Right ventricle myocardium inferior (tissue), 1 donor: ENCODE measurements at regions of chr2 and their contacts with region 1.

Region 1: GRCh38 chr2:38377050-38377828 is at the start of gene ATL2:
- DNase-seq: peak; percentile 99
- ATAC-seq: peak; percentile 95
- total RNA-seq, gene ATL2: 31.7 TPM

Region 2: DNA sequence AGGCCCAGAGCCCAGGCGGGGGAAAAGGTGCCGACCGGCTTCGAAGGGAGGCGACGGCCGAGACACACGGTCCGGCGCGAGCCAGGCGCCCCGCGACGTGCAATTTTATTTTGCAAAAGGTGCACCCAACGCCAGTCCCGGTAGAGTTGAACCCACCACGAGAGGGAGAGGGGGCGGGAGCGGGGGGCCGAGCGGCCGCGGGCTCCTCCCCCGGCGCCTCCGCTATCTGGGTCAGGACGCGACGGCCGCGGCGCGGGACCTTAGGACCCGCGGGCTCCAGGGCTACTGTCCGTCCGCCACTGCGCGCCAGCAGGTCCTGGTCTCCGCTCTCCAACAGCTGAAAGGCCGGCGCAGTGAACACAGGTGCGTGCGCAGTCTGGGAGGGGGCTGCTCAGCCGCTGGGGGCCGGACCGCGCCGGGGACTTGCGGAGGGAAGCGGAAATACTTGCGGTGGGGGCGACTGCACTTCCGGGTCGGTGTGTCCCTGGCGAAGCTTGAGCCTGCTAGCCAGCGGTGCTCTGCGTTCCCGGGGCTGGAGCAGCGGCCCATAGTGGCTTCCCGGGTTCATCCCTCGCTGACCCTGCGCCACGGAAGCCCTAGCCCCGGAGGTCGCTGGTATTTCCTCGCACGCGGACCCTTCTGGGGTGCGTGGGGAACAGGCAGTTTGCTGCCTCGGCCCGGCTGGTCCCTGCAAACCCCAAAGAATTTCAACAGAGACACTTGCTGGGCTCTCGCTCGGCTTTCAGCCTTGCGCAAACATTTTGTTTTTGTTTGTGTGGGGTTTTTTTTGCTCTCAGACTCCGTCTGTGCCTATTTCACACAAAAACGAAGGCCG is 452.0 kb before region 1 on chr2 and contains the start of gene RMDN2:
- intact Hi-C with region 1: loop called (anchors 10 kb)
- DNase-seq: peak; percentile 96
- ATAC-seq: peak; percentile 97
- total RNA-seq, gene RMDN2: 5.8 TPM

Region 3: GRCh38 chr2:38315707-38316333 is 61.4 kb before region 1 on chr2:
- intact Hi-C with region 1: loop called (anchors 2 kb)
- DNase-seq: no peak
- ATAC-seq: peak; percentile 50

Region 4: GRCh38 chr2:38442643-38443541 is 65.7 kb after region 1 on chr2:
- intact Hi-C with region 1: loop called (anchors 5 kb)
- DNase-seq: no peak
- ATAC-seq: peak; percentile 66

Region 5: DNA sequence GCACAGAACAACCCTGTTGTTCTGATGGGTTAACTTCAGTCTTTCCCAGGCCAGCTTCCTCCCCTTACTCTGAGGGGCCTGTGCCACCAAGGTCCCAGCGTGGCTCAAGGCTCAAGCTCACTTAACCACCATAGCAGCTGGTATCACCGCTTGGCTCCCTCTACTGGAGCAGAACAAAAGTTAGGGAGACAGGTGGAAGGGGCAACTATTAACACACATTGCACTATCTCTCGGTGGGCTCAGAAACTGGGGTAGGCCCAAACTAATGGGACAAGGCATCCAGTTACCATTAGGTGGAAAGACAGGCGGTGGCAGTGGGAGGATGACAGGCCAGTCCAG is 88.5 kb after region 1 on chr2:
- intact Hi-C with region 1: loop called (anchors 5 kb)
- DNase-seq: no peak
- ATAC-seq: peak; percentile 48

Region 6: GRCh38 chr2:38750891-38751595 is 373.8 kb after region 1 on chr2 and contains the start of gene SRSF7:
- intact Hi-C with region 1: loop called (anchors 5 kb)
- DNase-seq: peak; percentile 99
- ATAC-seq: peak; percentile 92
- total RNA-seq, gene SRSF7: 49.7 TPM